Heart left ventricle (tissue), 16 donors: ENCODE measurements at regions of chr12 and their contacts with region 1.

Region 1: GRCh38 chr12:58408516-58408915 is 467.1 kb downstream of the ATP23 start:
- DNase-seq: no peak
- ATAC-seq: peak in 3 of 4 donors; percentile 46 to 54 (median 53)
- H3K4me3 ChIP-seq: no peak overlapping the region
- H3K27ac ChIP-seq: no peak overlapping the region
- H3K4me1 ChIP-seq: peaks cover 0 to 17% (median 0%) of the 10 kb centered on the region in 12 donors
- H3K27me3 ChIP-seq: no peaks in the 10 kb centered on the region
- CTCF ChIP-seq: no peak
- POLR2A ChIP-seq: no peak

Region 2: GRCh38 chr12:58349161-58349560 is 59.4 kb before region 1 on chr12:
- intact Hi-C with region 1: no loop called
- DNase-seq: no peak
- ATAC-seq: no peak
- H3K4me3 ChIP-seq: no peak overlapping the region
- H3K27ac ChIP-seq: no peak overlapping the region
- H3K4me1 ChIP-seq: peaks cover 0 to 5% (median 0%) of the 10 kb centered on the region in 12 donors
- H3K27me3 ChIP-seq: no peaks in the 10 kb centered on the region
- CTCF ChIP-seq: no peak
- POLR2A ChIP-seq: no peak

Region 3: GRCh38 chr12:58381546-58381945 is 27.0 kb before region 1 on chr12:
- intact Hi-C with region 1: loop called in 1 of 10 experiments (anchors 2 kb)
- DNase-seq: no peak
- ATAC-seq: no peak
- H3K4me3 ChIP-seq: no peak overlapping the region
- H3K27ac ChIP-seq: no peak overlapping the region
- H3K4me1 ChIP-seq: no peaks in the 10 kb centered on the region
- H3K27me3 ChIP-seq: no peaks in the 10 kb centered on the region
- CTCF ChIP-seq: no peak
- POLR2A ChIP-seq: no peak

Region 4: DNA sequence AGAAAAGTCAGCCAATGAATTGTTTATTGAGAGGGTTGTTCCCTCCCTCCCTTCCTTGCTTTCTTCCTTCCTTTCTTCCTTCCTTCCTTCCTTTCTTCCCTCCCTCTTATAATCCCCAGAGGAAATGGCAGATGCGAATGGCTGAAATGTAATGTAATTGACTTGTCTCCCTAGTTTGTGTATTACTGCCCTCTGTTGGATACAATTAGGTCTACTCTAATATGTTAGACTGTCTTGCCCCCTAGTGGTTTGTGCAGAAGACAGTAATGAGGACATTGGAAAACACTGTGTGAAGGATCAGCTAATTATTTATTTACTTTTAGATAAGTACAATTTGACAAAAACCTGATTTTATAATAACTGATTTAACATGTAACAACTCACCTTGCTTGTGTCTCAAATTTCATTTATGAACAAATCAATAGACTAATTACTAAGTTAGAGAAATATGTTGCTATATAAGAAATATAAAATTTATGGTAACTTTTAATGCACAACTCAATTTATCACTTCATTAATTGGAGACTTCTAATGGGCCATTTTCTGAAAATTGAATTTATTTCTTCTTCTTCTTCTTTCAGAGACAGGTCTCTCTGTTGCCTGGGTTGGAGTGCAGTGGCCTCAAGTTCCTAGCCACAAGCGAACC is 741.6 kb after region 1 on chr12:
- intact Hi-C with region 1: no loop called
- DNase-seq: peak in 1 of 5 donors; percentile 16
- ATAC-seq: peak in 3 of 4 donors; percentile 89 to 94 (median 90)
- H3K4me3 ChIP-seq: no peak overlapping the region
- H3K27ac ChIP-seq: no peak overlapping the region
- H3K4me1 ChIP-seq: no peaks in the 10 kb centered on the region
- H3K27me3 ChIP-seq: no peaks in the 10 kb centered on the region
- CTCF ChIP-seq: peak; percentile 83 to 98 (median 95)
- POLR2A ChIP-seq: no peak